ENCODE measurements at regions of chr20 and their contacts with region 1.

Region 1: DNA sequence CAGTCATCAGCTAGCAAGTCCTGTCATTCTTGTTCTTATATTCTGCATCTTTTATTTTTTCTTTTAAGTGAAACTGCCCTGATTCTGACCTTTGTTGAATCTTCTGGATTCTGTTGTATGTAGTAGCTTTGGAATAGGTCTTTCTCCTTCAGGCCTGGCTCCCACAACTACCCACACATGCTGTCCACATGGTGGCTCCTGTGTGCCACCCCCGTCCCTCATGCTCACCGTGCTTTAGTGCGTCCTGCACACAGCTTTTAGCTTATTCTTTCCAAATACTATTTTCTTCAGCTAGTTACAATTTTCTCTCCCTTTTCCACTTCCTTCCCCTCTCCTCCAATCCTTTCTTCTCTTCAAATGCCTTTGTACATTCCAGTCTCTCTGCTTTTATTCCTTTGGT is 61.8 kb downstream of the CTNNBL1 start:
- DNase-seq: no peak
- ATAC-seq: no peak

Region 2: DNA sequence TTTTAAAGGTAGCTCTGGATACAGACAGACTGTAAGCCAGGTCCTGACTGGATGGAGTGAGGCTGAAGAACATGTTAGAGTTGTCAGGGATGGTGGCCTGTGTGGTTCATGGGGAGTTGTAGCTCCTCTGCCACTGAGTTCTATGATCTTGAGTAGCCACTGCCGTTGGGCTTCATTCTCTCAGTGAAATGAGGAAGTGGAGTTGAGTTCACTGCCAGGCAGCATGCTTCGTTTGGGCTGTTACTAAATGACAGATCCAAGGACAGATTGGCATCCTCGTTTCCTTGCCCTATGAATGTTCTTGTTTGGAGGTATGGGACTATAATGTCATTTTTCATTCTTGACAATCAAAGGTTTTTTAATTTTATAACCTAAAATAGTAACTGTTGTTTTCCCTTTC is 1838.6 kb before region 1 on chr20:
- intact Hi-C with region 1: no loop called
- DNase-seq: no peak
- ATAC-seq: no peak

Region 3: DNA sequence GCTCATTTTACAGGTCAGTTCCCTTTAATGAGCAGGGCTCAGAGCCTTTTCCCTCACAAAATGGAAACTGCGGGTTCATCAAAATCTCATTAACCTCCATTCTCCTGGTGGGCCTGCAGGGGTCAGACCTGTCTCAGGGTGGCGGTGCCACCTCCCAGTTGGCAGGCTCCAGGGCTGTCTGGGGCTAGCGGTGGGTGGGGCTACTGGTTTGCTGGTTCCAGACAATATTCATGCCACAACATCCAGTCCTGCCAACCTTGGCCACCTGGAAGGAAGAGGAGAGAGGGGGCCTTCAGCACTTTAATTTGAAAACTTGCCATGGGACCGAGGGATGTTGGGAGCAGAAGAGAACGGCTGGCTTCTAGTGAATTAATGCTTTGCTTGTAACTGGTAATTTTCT is 103.7 kb before region 1 on chr20:
- intact Hi-C with region 1: loop called (anchors 5 kb)
- DNase-seq: no peak
- ATAC-seq: peak; percentile 84

Region 4: DNA sequence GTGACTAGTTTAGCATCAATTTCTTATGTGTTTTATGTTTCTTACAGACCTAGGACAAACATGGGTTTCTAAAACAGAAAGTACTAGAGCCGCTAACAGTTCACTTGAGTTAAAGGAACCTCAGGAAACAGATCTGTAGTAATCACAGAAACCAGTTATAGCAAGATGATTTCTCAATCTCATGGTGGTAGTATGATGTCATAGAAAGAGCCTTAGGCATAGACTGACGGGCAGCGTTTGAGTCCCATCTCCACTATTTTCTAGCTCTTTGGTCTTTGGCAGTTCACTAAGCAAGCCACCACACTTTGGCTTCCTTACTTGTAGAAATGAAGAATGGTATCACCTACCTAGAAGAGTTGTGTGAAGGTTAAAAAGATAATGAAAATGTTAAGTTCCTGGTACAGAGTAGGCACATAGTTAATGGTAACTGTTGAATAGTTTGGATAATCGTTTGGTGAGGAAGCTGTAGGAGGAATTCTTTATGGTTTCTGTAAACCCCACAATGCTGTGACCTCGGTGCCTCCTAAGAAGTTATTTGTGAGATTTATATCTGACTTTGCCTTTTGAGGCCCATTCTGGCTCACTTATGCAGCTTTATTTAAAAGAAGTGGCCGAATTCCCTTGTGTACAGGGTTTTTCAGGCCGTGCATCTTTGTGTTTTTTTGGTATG is 40.5 kb before region 1 on chr20:
- intact Hi-C with region 1: no loop called
- DNase-seq: no peak
- ATAC-seq: no peak

Region 5: DNA sequence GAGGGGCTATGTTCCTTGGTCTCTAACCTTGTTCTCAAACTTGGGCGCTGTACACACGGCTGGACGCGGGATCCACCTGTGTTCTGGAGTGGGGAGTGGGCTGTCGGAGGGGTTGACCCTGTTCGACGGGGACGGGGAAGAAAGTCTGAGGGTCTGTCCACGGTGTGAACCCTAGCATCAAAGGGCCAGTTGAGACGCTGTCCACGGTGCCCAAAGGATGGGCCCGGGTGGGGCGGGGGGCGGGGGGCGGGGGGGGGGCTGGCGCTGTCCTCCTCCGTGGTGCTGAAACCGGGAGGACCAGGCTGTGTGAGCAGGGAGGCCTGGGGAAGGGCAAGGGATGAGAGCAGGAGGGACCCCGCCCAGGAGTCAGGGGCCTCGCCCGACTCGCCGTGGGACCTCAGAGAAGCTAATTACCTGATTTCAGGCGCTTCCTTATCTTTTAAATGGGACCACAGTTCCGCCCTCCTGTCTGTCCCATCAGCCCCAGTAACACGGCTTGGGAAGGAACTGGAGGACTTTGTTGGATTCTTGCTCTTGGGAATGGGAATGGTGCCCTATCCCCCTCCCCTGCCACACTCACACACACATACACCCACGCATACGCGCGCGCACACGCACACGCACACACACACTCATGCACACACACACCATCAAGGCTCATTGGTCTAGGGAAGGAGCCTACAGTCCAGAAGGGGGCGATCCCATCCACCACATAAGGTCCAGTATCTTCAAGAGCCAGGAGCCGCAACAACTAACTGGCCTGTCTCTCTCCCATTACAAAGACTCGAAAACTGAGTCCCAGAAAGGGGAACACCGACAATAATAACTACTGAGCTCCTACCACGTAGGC is 146.2 kb after region 1 on chr20:
- intact Hi-C with region 1: loop called (anchors 5 kb)
- DNase-seq: no peak
- ATAC-seq: peak; percentile 51

Region 6: GRCh38 chr20:38057351-38057972 is 301.8 kb after region 1 on chr20:
- intact Hi-C with region 1: loop called (anchors 10 kb)
- DNase-seq: peak; percentile 95
- ATAC-seq: peak; percentile 90

Measured in Right ventricle myocardium inferior (tissue), 1 donor.